Activated naive CD4-positive, alpha-beta T cell treated with anti-CD3 and anti-CD28 coated beads for 36 hours (primary cell): ENCODE measurements at regions of chr13 and their contacts with region 1.

Region 1: GRCh38 chr13:78603240-78603957 is at the start of gene POU4F1:
- DNase-seq: peak; percentile 84
- H3K4me3 Mint-ChIP-seq: peak within 1 kb of the TSS; percentile 73
- H3K27ac Mint-ChIP-seq: no peak within 1 kb of the TSS
- H3K4me1 Mint-ChIP-seq: peaks cover 42% of the 10 kb centered on the region
- H3K27me3 Mint-ChIP-seq: peaks cover 81% of the 10 kb centered on the region
- total RNA-seq, gene POU4F1: 0.07 TPM in 1 of 2 experiments, not detected in the other

Region 2: GRCh38 chr13:78658635-78659449 is 55.4 kb after region 1 on chr13 and contains the start of gene OBI1:
- CTCF ChIA-PET with region 1: no interaction called
- intact Hi-C with region 1: loop called (anchors 1 kb)
- DNase-seq: peak; percentile 90
- H3K4me3 Mint-ChIP-seq: peak within 1 kb of the TSS; percentile 100
- H3K27ac Mint-ChIP-seq: peak within 1 kb of the TSS; percentile 96
- H3K4me1 Mint-ChIP-seq: peaks cover 35% of the 10 kb centered on the region
- H3K27me3 Mint-ChIP-seq: no peaks in the 10 kb centered on the region
- total RNA-seq, gene OBI1: 16.0 to 17.7 TPM

Region 3: DNA sequence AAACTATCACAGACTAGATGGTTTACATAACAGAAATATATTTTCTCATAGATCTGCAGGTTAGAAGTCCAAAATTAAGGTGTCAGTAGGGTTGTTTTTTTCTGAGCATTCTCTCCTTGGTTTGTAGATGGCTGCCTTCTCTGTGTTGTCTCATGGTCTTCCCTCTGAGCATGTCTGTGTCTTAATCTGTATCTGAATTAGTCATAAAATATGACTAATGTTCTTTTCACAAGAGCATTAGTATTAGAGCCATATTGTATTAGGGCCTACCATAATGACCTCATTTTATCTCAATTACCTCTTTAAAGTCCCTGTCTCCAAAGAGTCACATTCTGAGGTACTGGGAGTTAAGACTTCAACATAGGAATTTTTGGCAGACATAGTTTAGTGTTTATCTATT is 132.7 kb after region 1 on chr13:
- CTCF ChIA-PET with region 1: no interaction called
- intact Hi-C with region 1: no loop called
- DNase-seq: no peak
- H3K4me3 Mint-ChIP-seq: no peak overlapping the region
- H3K27ac Mint-ChIP-seq: no peak overlapping the region
- H3K4me1 Mint-ChIP-seq: no peaks in the 10 kb centered on the region
- H3K27me3 Mint-ChIP-seq: peaks cover 5% of the 10 kb centered on the region

Region 4: DNA sequence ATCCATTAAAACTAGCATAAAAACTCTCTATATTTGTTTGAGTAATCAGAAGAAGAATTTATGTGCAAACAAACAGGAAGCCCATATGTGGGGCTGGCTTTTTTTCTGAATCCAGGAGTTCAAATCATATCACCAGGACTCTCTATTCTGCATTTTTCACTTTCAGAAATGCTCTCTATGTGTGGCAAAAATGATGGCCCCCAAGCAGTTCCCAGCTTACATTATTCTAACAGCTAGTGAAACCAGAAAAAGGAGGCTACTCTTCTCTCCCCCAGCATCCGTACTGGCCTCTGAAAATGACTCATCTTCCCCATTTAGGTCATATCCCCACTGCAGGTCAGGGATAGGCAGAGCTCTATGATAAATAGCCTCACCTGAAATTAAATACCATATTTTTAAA is 782.3 kb after region 1 on chr13:
- CTCF ChIA-PET with region 1: no interaction called
- intact Hi-C with region 1: loop called (anchors 5 kb)
- DNase-seq: peak; percentile 40
- H3K4me3 Mint-ChIP-seq: no peak overlapping the region
- H3K27ac Mint-ChIP-seq: no peak overlapping the region
- H3K4me1 Mint-ChIP-seq: peaks cover 71% of the 10 kb centered on the region
- H3K27me3 Mint-ChIP-seq: no peaks in the 10 kb centered on the region

Region 5: GRCh38 chr13:79451500-79451962 is 848.1 kb after region 1 on chr13:
- CTCF ChIA-PET with region 1: no interaction called
- intact Hi-C with region 1: loop called (anchors 5 kb)
- DNase-seq: peak; percentile 97
- H3K4me3 Mint-ChIP-seq: peak overlapping the region; percentile 68
- H3K27ac Mint-ChIP-seq: peak overlapping the region; percentile 93
- H3K4me1 Mint-ChIP-seq: peaks cover 62% of the 10 kb centered on the region
- H3K27me3 Mint-ChIP-seq: no peaks in the 10 kb centered on the region

Region 6: GRCh38 chr13:80342471-80343380 is 1739.3 kb after region 1 on chr13:
- CTCF ChIA-PET with region 1: no interaction called
- intact Hi-C with region 1: loop called (anchors 10 kb)
- DNase-seq: peak; percentile 64
- H3K4me3 Mint-ChIP-seq: peak overlapping the region; percentile 57
- H3K27ac Mint-ChIP-seq: no peak overlapping the region
- H3K4me1 Mint-ChIP-seq: peaks cover 8% of the 10 kb centered on the region
- H3K27me3 Mint-ChIP-seq: peaks cover 48% of the 10 kb centered on the region